Activated CD4-positive, alpha-beta T cell treated with anti-CD3 and anti-CD28 coated beads for 36 hours (primary cell): ENCODE measurements at regions of chr14 and their contacts with region 1.

Region 1: DNA sequence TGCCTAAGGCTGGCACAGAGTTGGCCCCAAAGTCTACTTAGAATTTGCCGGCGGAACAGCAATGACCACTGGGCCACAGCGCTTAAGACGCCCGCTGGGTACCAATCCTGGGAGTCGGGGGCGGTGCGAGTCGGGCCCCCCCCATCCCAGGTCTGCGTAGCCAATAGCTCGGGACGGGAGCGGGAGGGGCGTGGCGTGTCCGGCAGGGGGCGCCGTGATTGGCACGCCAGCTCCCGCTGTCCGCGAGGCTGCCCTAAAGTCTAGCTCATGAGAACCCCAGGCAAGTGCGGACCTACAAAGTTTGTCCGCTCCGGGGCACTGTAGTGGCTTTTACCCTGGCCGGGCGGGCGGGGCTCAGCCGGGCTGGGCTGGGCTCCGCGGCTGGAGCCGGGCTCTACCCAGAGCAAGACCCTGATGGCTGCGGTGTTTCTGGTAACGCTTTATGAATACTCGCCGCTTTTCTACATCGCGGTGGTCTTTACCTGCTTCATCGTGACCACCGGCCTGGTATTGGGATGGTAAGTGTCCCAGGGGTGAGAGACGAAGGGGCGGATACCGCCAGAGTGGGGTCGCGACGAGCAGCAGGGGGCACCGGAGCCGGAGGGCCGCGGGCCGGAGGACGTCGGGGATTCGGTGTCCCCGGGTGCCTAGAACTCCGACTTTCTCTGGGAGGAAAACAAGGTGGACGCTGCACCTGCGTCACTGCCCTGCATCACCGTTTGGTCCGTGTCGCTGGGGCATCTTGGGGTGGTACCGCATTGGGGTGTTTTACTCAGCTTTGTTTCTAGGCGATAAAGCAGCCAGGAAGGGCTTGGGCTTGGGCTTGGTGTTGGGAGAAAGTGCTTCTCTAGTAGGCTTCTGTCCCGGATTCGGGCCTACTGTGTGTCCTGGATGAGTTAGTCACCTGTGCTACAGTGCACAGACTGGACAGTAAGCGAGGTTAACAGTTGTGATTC is at the start of gene CGRRF1:
- DNase-seq: peak; percentile 98
- ATAC-seq: peak; percentile 99
- H3K4me3 Mint-ChIP-seq: peak within 1 kb of the TSS; percentile 92
- H3K27ac Mint-ChIP-seq: peak within 1 kb of the TSS; percentile 80
- H3K4me1 Mint-ChIP-seq: peaks cover 34% of the 10 kb centered on the region
- H3K27me3 Mint-ChIP-seq: no peaks in the 10 kb centered on the region
- total RNA-seq, gene CGRRF1: 10.2 to 15.2 TPM

Region 2: GRCh38 chr14:54396493-54397335 is 113.1 kb before region 1 on chr14 and contains the start of gene CDKN3:
- CTCF ChIA-PET with region 1: interaction called, 3 read pairs
- POLR2A ChIA-PET with region 1: interaction called, 4 read pairs
- intact Hi-C with region 1: loop called in 1 of 2 experiments (anchors 1 kb)
- DNase-seq: peak; percentile 98
- ATAC-seq: peak; percentile 97
- H3K4me3 Mint-ChIP-seq: peak within 1 kb of the TSS; percentile 82
- H3K27ac Mint-ChIP-seq: peak within 1 kb of the TSS; percentile 76
- H3K4me1 Mint-ChIP-seq: peaks cover 24% of the 10 kb centered on the region
- H3K27me3 Mint-ChIP-seq: no peaks in the 10 kb centered on the region
- total RNA-seq, gene CDKN3: 86.7 to 133 TPM

Region 3: DNA sequence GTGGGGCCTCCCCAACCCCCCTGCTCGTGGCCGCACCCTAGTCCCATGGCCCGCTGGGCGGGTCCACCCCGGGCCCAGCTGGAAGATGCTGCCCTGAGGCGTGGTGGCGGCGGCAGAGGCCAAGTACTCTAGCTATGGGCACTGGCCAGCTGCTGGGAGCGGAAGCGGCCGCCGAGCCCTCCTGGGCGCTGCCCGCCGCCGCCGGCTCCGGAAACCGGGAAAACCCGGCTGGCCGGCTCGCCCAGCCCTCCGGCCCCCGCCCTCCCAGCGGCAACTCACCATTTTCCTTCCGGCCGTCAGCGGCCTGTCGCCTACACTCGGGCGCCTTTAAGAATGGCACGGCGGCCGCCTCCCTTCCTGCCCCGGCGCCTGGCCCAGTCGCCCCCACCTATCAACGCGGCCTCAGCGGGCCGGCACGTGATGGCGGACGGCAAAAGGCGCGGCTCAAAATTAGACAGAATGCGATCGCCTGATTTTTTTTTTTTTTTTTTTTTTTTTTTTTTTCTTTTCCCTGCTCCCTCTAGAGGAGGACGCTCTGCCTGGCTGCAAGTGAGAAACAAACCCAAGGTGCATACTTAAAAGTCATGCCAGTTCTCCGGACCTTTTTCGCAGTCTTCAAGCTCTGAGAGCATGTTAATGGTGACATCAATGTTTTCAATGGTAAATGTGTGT is 21.0 kb before region 1 on chr14 and contains the start of gene GMFB:
- CTCF ChIA-PET with region 1: interaction called, 31 read pairs
- POLR2A ChIA-PET with region 1: interaction called, 6 read pairs
- intact Hi-C with region 1: loop called (anchors 1 kb)
- DNase-seq: peak; percentile 94
- ATAC-seq: peak; percentile 96
- H3K4me3 Mint-ChIP-seq: peak within 1 kb of the TSS; percentile 91
- H3K27ac Mint-ChIP-seq: peak within 1 kb of the TSS; percentile 96
- H3K4me1 Mint-ChIP-seq: peaks cover 56% of the 10 kb centered on the region
- H3K27me3 Mint-ChIP-seq: no peaks in the 10 kb centered on the region
- total RNA-seq, gene GMFB: 28.9 to 37.3 TPM

Region 4: DNA sequence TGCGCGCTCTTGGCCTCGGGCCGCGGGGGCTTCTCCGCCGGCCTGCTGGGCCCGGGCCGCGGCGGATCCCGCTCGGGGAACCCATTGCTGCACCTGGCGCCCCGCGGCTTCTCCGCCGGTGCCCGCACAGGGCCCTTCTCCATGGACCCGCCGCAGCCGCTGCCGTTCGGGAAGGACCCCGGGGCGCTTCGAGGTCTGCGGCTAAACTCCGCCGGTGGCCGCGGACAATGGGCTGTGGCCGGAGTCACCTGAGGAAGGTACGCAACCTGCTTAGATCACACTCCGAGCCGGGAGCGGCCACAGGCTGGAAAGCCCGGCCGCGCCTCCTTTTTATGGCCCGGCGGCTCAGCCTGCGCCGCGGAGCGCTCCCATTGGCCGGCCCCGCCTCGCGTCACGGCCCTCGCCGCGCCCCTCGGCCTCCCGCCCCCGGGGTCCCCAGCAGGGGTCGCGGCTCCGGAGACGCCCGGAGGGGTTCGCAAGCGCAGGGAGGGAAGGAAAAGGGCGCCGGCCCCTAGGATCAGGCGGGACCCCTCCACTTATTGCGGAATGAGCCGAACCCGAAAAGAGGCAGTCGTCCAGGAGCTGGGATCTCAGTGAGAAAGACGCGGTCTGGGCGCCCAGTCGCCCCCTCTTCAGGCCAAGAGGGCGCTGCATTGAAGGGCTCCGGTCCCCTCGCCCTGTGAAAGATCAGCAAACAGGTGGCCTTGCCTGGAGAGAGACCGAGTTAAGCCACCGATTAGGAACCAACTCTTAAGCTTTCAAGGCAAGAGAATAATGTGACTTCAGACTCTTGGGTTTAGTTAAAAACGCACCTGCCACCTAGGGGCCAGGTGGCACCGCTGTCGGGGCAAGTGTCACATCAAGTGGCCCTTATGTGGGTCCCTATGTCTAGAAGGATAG is 392.9 kb after region 1 on chr14 and contains the start of gene GCH1:
- CTCF ChIA-PET with region 1: no interaction called
- POLR2A ChIA-PET with region 1: no interaction called
- intact Hi-C with region 1: loop called in 1 of 2 experiments (anchors 1 kb)
- DNase-seq: peak; percentile 81
- ATAC-seq: peak; percentile 80
- H3K4me3 Mint-ChIP-seq: peak within 1 kb of the TSS; percentile 88
- H3K27ac Mint-ChIP-seq: peak within 1 kb of the TSS; percentile 90
- H3K4me1 Mint-ChIP-seq: peaks cover 26% of the 10 kb centered on the region
- H3K27me3 Mint-ChIP-seq: no peaks in the 10 kb centered on the region
- total RNA-seq, gene GCH1: 28.1 to 36.4 TPM